Activated naive CD4-positive, alpha-beta T cell treated with anti-CD3 and anti-CD28 coated beads for 36 hours (primary cell): ENCODE measurements at regions of chr2 and their contacts with region 1.

Region 1: GRCh38 chr2:189661148-189661956 is at the start of gene ASNSD1:
- DNase-seq: peak; percentile 98
- H3K4me3 Mint-ChIP-seq: no peak within 1 kb of the TSS
- H3K27ac Mint-ChIP-seq: no peak within 1 kb of the TSS
- H3K4me1 Mint-ChIP-seq: peaks cover 52% of the 10 kb centered on the region
- H3K27me3 Mint-ChIP-seq: no peaks in the 10 kb centered on the region
- total RNA-seq, gene ASNSD1: 35.4 to 38.2 TPM

Region 2: GRCh38 chr2:189569295-189569910 is 91.9 kb before region 1 on chr2:
- CTCF ChIA-PET with region 1: no interaction called
- intact Hi-C with region 1: no loop called
- DNase-seq: no peak
- H3K4me3 Mint-ChIP-seq: peak overlapping the region; percentile 16
- H3K27ac Mint-ChIP-seq: peak overlapping the region; percentile 78
- H3K4me1 Mint-ChIP-seq: peaks cover 37% of the 10 kb centered on the region
- H3K27me3 Mint-ChIP-seq: no peaks in the 10 kb centered on the region

Region 3: GRCh38 chr2:189580658-189581353 is 80.5 kb before region 1 on chr2 and contains the start of gene SLC40A1:
- CTCF ChIA-PET with region 1: interaction called, 4 read pairs
- intact Hi-C with region 1: loop called (anchors 1 kb)
- DNase-seq: peak; percentile 67
- H3K4me3 Mint-ChIP-seq: peak within 1 kb of the TSS; percentile 85
- H3K27ac Mint-ChIP-seq: peak within 1 kb of the TSS; percentile 82
- H3K4me1 Mint-ChIP-seq: peaks cover 44% of the 10 kb centered on the region
- H3K27me3 Mint-ChIP-seq: peaks cover 5% of the 10 kb centered on the region
- total RNA-seq, gene SLC40A1: 3.8 to 4.1 TPM

Region 4: DNA sequence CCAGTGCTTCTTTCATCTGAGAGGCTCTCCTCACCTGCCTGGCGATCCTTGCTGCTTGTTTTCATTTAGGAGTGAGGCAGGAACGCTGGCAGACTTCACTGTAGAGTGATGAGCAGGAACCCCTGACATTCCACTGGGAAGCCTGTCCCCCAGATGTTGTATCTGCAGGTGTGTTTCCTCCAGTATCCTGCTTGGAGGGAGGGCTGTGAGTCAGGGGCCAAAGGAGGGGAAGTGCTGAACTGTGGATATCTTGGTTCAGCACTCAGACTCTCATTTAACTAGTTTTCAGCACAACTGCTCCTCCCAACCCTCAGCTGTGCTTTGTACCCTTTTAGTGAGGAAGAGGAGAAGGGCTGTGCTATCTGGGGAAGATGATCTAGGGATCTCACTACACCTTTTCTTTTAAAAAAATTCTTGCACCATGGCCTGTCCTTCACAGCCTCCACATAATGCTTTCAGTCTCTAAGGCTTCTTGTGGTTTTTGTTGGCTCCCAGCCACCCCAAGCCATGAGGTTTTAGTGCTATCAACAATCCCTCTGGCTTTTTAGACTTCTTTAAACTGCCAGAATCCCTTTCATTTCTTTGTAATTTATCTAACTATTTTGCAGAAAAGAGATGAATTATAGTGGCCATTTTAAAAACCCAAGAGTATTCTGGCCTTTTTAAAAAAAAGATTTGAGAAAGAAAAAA is 24.3 kb after region 1 on chr2:
- CTCF ChIA-PET with region 1: interaction called, 27 read pairs
- intact Hi-C with region 1: no loop called
- DNase-seq: no peak
- H3K4me3 Mint-ChIP-seq: no peak overlapping the region
- H3K27ac Mint-ChIP-seq: no peak overlapping the region
- H3K4me1 Mint-ChIP-seq: peaks cover 27% of the 10 kb centered on the region
- H3K27me3 Mint-ChIP-seq: no peaks in the 10 kb centered on the region

Region 5: GRCh38 chr2:189783927-189784867 is 122.8 kb after region 1 on chr2 and contains the starts of genes ORMDL1 and PMS1:
- CTCF ChIA-PET with region 1: interaction called, 4 read pairs
- intact Hi-C with region 1: loop called (anchors 1 kb)
- DNase-seq: peak; percentile 93
- H3K4me3 Mint-ChIP-seq: peak within 1 kb of the TSS; percentile 93
- H3K27ac Mint-ChIP-seq: peak within 1 kb of the TSS; percentile 92
- H3K4me1 Mint-ChIP-seq: peaks cover 51% of the 10 kb centered on the region
- H3K27me3 Mint-ChIP-seq: no peaks in the 10 kb centered on the region
- total RNA-seq, gene ORMDL1: 34.6 to 37.3 TPM
- total RNA-seq, gene PMS1: 29.7 to 32.5 TPM

Region 6: DNA sequence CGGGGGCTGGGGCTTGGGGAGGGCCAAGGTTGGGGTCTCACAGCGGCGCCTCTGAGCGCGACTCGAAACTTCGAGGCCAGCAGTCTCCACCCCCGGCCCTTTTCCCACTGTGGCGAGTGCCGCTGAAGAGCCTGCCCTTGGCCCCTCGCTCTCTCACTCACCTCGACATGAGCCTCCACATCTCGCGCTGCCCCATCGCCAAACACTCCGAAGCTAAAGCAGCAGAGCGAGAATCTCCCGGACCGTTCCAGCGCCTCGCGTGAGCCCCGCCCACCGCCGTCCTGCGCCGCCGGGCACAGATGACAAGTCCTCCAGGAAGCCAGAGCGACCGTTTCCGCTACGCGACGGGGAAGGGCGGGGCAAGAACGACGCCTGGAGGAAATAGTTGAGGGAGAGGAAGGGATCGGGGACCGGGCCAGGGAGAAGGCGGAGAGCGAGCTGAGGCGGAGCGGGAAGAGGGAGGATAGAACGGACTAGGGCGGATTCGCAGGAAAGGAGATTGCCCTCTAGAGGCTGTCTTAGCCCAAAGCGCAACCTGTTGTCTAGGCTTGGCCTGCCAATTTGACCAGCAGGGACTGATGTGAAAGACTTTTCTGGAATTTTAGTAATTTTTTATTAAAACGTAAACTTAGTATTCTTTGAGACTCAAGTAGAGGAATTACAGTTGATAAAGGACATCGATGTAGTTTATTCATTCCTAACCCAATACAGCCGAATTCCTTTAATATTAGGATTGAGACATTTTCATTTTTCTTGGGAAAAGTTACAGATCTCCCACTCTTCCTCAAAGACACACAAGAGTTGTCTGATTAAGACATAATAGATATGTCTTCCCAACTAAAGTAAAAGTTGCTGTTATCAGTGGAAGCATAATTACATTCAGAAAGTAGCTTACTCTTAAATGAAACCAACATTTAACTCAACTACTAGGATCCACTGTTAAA is 658.5 kb after region 1 on chr2 and contains the start of gene HIBCH:
- CTCF ChIA-PET with region 1: interaction called, 3 read pairs
- intact Hi-C with region 1: loop called (anchors 1 kb)
- DNase-seq: peak; percentile 94
- H3K4me3 Mint-ChIP-seq: peak within 1 kb of the TSS; percentile 91
- H3K27ac Mint-ChIP-seq: peak within 1 kb of the TSS; percentile 88
- H3K4me1 Mint-ChIP-seq: peaks cover 39% of the 10 kb centered on the region
- H3K27me3 Mint-ChIP-seq: no peaks in the 10 kb centered on the region
- total RNA-seq, gene HIBCH: 19.2 TPM

Region 7: DNA sequence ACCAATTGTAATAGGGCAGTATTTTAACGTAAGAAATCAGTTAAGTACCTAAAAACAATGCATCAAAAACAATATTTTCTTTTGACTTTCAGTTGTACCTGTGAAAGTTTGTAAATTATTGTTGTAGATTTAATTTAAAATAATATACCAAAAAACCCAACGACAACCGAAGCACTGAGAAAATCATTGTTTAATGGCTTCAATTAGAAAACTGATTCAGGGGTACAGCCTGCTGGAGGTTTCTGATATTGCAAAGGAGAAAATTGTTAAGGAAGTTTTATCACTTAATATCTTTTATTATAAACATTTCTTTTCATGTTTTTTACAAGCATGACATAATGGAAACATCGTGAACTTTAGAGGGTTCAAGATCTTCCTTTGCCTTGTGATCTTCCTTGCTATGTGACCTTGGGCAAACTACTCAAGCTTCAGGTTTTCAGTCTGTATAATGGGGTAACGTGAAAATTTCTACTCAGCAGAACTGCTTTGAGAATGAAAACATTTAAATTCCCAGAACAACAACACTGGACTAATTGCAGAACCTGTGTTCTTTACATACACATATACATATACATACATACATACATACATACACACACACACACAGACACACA is 1142.9 kb after region 1 on chr2:
- CTCF ChIA-PET with region 1: no interaction called
- intact Hi-C with region 1: loop called (anchors 5 kb)
- DNase-seq: no peak
- H3K4me3 Mint-ChIP-seq: no peak overlapping the region
- H3K27ac Mint-ChIP-seq: no peak overlapping the region
- H3K4me1 Mint-ChIP-seq: peaks cover 23% of the 10 kb centered on the region
- H3K27me3 Mint-ChIP-seq: no peaks in the 10 kb centered on the region